IMR-90 (cell line): ENCODE measurements at regions of chr3 and their contacts with region 1.

Region 1: GRCh38 chr3:84783281-84783680 is 175.5 kb upstream of the CADM2 start:
- DNase-seq: no peak
- ATAC-seq: no peak
- H3K4me3 ChIP-seq: no peak overlapping the region
- H3K27ac ChIP-seq: no peak overlapping the region
- H3K4me1 ChIP-seq: no peaks in the 10 kb centered on the region
- H3K27me3 ChIP-seq: no peaks in the 10 kb centered on the region
- CTCF ChIP-seq: no peak
- POLR2A ChIP-seq: no peak
- RAD21 ChIP-seq: no peak

Region 2: DNA sequence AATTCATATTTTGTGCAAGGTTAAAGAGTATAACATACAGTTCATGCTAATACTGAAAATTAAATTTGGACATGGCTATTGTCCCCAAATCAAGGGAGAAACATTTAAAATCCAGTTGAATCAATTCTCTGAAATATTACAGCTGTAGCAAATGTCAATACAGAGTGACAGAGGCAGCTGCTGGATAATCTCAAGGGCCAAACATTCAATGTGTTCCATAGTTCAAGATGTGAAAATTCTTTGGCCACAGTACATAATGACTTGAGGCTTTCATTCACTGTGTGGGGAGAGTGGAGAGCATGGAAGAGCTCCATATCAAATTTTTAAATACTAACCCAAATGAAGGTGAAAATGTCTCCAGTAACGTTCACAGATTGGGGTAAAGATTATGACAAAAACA is 1017.3 kb before region 1 on chr3:
- CTCF ChIA-PET with region 1: interaction called, 10 read pairs
- POLR2A ChIA-PET with region 1: no interaction called
- dilution Hi-C with region 1: no loop called
- in situ Hi-C with region 1: no loop called
- intact Hi-C with region 1: no loop called
- DNase-seq: no peak
- ATAC-seq: no peak
- H3K4me3 ChIP-seq: no peak overlapping the region
- H3K27ac ChIP-seq: no peak overlapping the region
- H3K4me1 ChIP-seq: no peaks in the 10 kb centered on the region
- H3K27me3 ChIP-seq: no peaks in the 10 kb centered on the region
- CTCF ChIP-seq: no peak
- POLR2A ChIP-seq: no peak
- RAD21 ChIP-seq: no peak

Region 3: GRCh38 chr3:84738086-84738485 is 45.2 kb before region 1 on chr3:
- CTCF ChIA-PET with region 1: no interaction called
- POLR2A ChIA-PET with region 1: no interaction called
- dilution Hi-C with region 1: no loop called
- in situ Hi-C with region 1: no loop called
- intact Hi-C with region 1: no loop called
- DNase-seq: no peak
- ATAC-seq: no peak
- H3K4me3 ChIP-seq: no peak overlapping the region
- H3K27ac ChIP-seq: no peak overlapping the region
- H3K4me1 ChIP-seq: no peaks in the 10 kb centered on the region
- H3K27me3 ChIP-seq: no peaks in the 10 kb centered on the region
- CTCF ChIP-seq: no peak
- POLR2A ChIP-seq: no peak
- RAD21 ChIP-seq: no peak

Region 4: DNA sequence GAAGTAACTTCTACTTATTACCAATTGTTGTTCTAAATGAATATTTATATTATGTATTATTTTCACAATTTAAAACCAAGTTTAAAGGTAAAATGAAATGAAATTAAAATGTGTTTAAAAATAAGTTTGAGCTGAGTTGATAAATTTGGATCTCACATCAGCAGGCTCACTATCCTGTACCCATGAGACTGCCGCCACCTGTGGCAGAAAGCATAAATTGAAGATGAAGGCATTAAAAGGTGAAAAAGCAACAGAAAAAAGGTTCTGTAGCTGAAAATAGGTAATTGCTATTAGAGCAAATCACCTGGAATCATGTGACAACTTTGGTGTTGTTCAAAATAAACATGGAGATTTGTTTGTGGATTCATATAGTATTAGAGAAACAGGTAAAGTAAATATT is 42.5 kb after region 1 on chr3:
- CTCF ChIA-PET with region 1: no interaction called
- POLR2A ChIA-PET with region 1: no interaction called
- dilution Hi-C with region 1: no loop called
- in situ Hi-C with region 1: no loop called
- intact Hi-C with region 1: no loop called
- DNase-seq: no peak
- ATAC-seq: no peak
- H3K4me3 ChIP-seq: no peak overlapping the region
- H3K27ac ChIP-seq: no peak overlapping the region
- H3K4me1 ChIP-seq: no peaks in the 10 kb centered on the region
- H3K27me3 ChIP-seq: no peaks in the 10 kb centered on the region
- CTCF ChIP-seq: no peak
- POLR2A ChIP-seq: no peak
- RAD21 ChIP-seq: no peak